ENCODE measurements at regions of chr11 and their contacts with region 1.

Region 1: DNA sequence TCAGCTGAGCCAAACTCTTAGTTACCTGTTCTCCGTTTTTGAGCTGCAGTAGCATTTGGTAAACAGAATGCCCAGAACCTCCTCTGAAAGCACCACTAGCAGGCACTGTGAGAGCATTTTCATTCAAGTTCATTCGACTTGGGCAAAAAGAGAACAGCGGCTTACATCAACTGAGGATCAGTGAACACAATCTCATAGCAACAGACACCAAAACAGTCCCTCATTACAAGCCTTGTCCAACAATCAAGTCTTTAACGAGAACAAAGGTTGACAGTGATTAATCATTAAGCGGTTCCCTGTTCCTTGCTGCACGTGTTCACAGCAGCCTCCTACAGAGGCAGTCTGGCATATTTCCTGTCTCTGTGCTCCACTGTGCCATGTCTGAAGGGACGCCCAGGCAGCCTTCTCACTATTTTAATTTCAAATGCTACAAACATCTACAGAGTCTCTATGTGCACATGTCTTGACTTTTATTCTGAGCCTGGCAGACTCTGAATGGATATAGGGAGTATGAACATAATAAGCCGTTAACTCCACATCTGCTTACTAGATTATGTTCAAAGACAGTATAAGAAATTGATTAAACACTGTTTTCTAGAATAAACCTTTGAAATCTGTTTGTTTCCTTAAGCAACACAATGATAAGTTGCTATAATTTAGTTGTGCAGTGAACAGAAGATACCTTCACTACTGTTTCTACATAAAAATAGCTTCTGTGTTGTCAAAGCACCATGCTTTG is 88.3 kb upstream of the MTMR2 start:
- DNase-seq: peak; percentile 59
- H3K4me3 Mint-ChIP-seq: peak overlapping the region; percentile 32
- H3K27ac Mint-ChIP-seq: peak overlapping the region; percentile 75
- H3K4me1 Mint-ChIP-seq: peaks cover 55% of the 10 kb centered on the region
- H3K27me3 Mint-ChIP-seq: no peaks in the 10 kb centered on the region

Region 2: GRCh38 chr11:95835768-95836488 is 176.3 kb before region 1 on chr11:
- CTCF ChIA-PET with region 1: interaction called, 3 read pairs
- POLR2A ChIA-PET with region 1: no interaction called
- intact Hi-C with region 1: loop called (anchors 5 kb)
- DNase-seq: peak; percentile 63
- H3K4me3 Mint-ChIP-seq: no peak overlapping the region
- H3K27ac Mint-ChIP-seq: no peak overlapping the region
- H3K4me1 Mint-ChIP-seq: peaks cover 3% of the 10 kb centered on the region
- H3K27me3 Mint-ChIP-seq: no peaks in the 10 kb centered on the region

Region 3: DNA sequence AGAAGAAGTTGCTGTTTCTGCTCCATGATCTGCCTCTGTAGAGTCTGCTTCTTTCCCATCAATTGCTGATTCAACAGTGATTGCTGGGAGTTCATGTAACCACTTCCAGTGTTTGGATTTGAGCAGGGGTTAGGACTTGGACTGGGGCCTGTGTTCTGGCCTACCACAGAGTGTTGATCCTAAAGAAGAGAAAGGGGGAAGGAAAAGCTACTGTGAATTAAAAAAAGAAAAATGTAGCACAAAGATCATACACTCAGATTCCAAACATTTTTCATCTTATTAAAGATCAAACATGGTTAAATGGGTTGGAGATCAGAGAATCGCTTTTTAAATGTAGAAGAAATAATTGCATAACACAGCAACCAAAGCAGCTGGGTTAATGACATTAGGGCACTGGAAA is 20.7 kb before region 1 on chr11:
- CTCF ChIA-PET with region 1: no interaction called
- POLR2A ChIA-PET with region 1: no interaction called
- intact Hi-C with region 1: no loop called
- DNase-seq: no peak
- H3K4me3 Mint-ChIP-seq: no peak overlapping the region
- H3K27ac Mint-ChIP-seq: no peak overlapping the region
- H3K4me1 Mint-ChIP-seq: peaks cover 6% of the 10 kb centered on the region
- H3K27me3 Mint-ChIP-seq: no peaks in the 10 kb centered on the region

Region 4: DNA sequence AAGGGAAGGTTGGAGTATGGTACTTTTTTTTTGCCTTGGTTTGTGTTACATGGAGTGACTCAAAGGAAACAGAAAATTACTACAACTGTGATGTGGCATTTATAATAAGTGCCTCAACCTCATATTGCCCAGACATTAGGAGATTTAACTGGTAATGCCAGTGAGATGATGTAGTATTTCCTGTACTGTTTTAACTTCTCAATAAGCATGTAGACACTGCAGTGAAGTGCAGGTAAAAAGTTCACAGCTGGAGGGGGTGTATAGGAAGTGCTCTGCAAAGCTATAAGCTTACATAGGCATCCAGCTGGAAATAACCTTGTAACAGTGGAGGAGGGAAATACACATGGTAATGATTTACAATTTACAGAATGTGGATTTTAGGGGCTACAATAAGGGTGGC is 49.9 kb after region 1 on chr11:
- CTCF ChIA-PET with region 1: interaction called, 3 read pairs
- POLR2A ChIA-PET with region 1: no interaction called
- intact Hi-C with region 1: loop called (anchors 1 kb)
- DNase-seq: peak; percentile 54
- H3K4me3 Mint-ChIP-seq: peak overlapping the region; percentile 31
- H3K27ac Mint-ChIP-seq: peak overlapping the region; percentile 88
- H3K4me1 Mint-ChIP-seq: peaks cover 75% of the 10 kb centered on the region
- H3K27me3 Mint-ChIP-seq: no peaks in the 10 kb centered on the region

Region 5: DNA sequence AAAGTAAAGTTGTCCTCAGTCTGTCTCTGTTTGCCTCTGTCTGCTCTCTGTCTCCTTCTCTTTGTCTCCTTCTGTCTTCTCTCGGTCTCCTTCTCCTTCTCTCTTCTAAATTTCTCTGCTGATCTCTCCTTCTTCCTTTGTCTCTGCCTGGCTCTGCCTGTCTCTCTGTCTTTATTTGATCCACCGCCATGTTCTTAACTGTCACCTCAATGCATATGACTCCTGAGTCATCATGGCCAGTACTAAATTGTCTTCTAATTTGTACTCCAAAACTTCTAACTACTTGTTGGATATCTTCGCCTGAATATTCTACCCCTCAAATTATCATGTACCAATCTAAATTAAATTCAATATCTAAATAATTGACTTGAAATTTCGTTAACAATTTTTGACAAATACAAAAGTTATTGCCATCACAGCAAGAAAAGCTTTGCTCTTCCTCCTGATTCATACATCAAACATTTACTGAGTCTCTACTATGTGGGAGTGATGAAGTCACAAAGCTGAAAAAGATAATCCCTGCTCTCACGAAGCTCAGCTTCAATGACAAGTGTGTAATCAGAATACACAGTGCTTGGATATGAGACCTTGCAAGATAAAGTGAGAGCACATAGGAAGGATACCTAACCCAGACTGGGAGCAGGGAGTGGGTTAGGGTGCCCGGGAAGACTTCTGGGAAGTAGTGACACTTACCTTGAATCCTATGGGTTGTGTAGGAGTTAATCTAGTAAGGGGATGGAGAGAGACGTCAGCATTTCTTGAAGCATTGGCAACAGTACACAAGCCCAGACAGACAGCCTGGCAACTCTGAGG is 137.7 kb after region 1 on chr11:
- CTCF ChIA-PET with region 1: no interaction called
- POLR2A ChIA-PET with region 1: no interaction called
- intact Hi-C with region 1: loop called (anchors 1 kb)
- DNase-seq: no peak
- H3K4me3 Mint-ChIP-seq: no peak overlapping the region
- H3K27ac Mint-ChIP-seq: no peak overlapping the region
- H3K4me1 Mint-ChIP-seq: peaks cover 41% of the 10 kb centered on the region
- H3K27me3 Mint-ChIP-seq: no peaks in the 10 kb centered on the region

Region 6: GRCh38 chr11:96207459-96208449 is 195.5 kb after region 1 on chr11:
- CTCF ChIA-PET with region 1: no interaction called
- POLR2A ChIA-PET with region 1: no interaction called
- intact Hi-C with region 1: loop called (anchors 5 kb)
- DNase-seq: peak; percentile 44
- H3K4me3 Mint-ChIP-seq: peak overlapping the region; percentile 55
- H3K27ac Mint-ChIP-seq: peak overlapping the region; percentile 91
- H3K4me1 Mint-ChIP-seq: peaks cover 85% of the 10 kb centered on the region
- H3K27me3 Mint-ChIP-seq: no peaks in the 10 kb centered on the region

Region 7: GRCh38 chr11:96254087-96254486 is 241.8 kb after region 1 on chr11:
- CTCF ChIA-PET with region 1: no interaction called
- POLR2A ChIA-PET with region 1: no interaction called
- intact Hi-C with region 1: loop called (anchors 5 kb)
- DNase-seq: peak; percentile 48
- H3K4me3 Mint-ChIP-seq: peak overlapping the region; percentile 46
- H3K27ac Mint-ChIP-seq: peak overlapping the region; percentile 71
- H3K4me1 Mint-ChIP-seq: peaks cover 84% of the 10 kb centered on the region
- H3K27me3 Mint-ChIP-seq: no peaks in the 10 kb centered on the region

Measured in activated CD4-positive, alpha-beta memory T cell treated with anti-CD3 and anti-CD28 coated beads for 36 hours (primary cell).